Activated CD8-positive, alpha-beta memory T cell treated with anti-CD3 and anti-CD28 coated beads, Interleukin-2, amount 10 ng/mL, durations not matched to agents 7 days and 5 days (primary cell): ENCODE measurements at regions of chr3 and their contacts with region 1.

Region 1: GRCh38 chr3:108477511-108478147 is 32.8 kb downstream of the MYH15 start:
- DNase-seq: peak; percentile 72
- ATAC-seq: peak; percentile 71
- H3K4me3 Mint-ChIP-seq: no peak overlapping the region
- H3K27ac Mint-ChIP-seq: no peak overlapping the region
- H3K4me1 Mint-ChIP-seq: peaks cover 6% of the 10 kb centered on the region
- H3K27me3 Mint-ChIP-seq: peaks cover 20% of the 10 kb centered on the region

Region 2: GRCh38 chr3:108334701-108335100 is 142.9 kb before region 1 on chr3:
- CTCF ChIA-PET with region 1: no interaction called
- DNase-seq: no peak
- ATAC-seq: no peak
- H3K4me3 Mint-ChIP-seq: no peak overlapping the region
- H3K27ac Mint-ChIP-seq: no peak overlapping the region
- H3K4me1 Mint-ChIP-seq: peaks cover 26% of the 10 kb centered on the region
- H3K27me3 Mint-ChIP-seq: no peaks in the 10 kb centered on the region

Region 3: DNA sequence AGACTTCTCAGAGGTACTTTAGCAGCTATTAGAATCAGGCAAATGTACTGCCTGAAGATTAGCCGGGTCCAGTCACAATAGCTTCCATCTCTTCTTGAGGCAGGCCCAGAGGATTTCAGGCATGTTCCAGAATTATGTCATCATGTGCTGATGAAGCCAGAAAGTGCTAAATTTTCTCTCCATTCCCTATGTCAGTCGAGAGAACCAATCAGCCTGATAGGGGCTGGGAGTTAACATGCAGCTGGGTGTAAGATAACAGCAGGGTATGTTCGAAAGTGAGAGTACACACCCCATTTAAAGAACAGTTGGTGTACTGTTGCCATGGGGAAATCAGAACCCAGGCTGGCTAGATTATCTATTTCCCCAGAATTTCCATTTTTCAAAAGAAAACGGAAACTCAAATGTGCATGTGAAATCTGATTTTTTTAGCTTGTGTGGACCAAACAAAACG is 15.9 kb before region 1 on chr3:
- CTCF ChIA-PET with region 1: interaction called, 12 read pairs
- DNase-seq: no peak
- ATAC-seq: no peak
- H3K4me3 Mint-ChIP-seq: no peak overlapping the region
- H3K27ac Mint-ChIP-seq: no peak overlapping the region
- H3K4me1 Mint-ChIP-seq: no peaks in the 10 kb centered on the region
- H3K27me3 Mint-ChIP-seq: peaks cover 7% of the 10 kb centered on the region

Region 4: GRCh38 chr3:108489771-108490170 is 12.1 kb after region 1 on chr3:
- CTCF ChIA-PET with region 1: interaction called, 22 read pairs
- DNase-seq: peak; percentile 53
- ATAC-seq: peak; percentile 82
- H3K4me3 Mint-ChIP-seq: no peak overlapping the region
- H3K27ac Mint-ChIP-seq: no peak overlapping the region
- H3K4me1 Mint-ChIP-seq: peaks cover 4% of the 10 kb centered on the region
- H3K27me3 Mint-ChIP-seq: peaks cover 12% of the 10 kb centered on the region